Activated naive CD4-positive, alpha-beta T cell treated with anti-CD3 and anti-CD28 coated beads for 36 hours (primary cell): ENCODE measurements at regions of chr2 and their contacts with region 1.

Region 1: DNA sequence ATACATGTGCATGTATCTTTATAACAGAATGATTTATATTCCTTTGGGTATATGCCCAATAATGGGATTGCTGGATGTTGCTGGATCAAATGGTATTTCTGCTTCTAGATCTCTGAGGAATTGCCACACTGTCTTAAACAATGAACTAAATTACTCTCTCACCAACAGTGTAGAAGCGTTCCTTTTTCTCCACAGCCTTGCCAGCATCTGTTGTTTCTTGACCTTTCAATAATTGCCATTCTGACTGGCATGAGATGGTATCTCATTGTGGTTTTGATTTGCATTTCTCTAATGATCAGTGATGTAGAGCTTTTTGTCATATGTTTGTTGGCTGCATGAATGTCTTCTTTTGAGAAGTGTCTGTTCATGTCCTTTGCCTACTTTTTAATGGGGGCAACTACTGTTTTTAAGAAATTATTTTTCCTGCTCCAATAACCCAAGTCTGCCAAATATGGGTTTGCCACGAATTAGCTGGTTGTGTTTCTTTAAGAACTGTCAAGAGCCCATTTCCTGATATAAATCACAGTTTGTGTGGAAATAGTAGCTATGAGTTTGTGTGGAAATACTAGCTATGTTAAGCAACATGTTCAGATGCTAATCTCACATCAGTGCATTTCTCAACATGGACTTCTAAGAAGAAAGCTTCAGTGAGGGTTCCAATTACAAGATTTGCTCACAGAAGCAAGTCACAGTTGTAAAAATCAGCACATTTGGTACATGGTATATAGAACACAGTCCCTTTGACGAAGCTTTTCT is 259.4 kb downstream of the ANAPC1 start:
- DNase-seq: no peak
- H3K4me3 Mint-ChIP-seq: no peak overlapping the region
- H3K27ac Mint-ChIP-seq: no peak overlapping the region
- H3K4me1 Mint-ChIP-seq: peaks cover 14% of the 10 kb centered on the region
- H3K27me3 Mint-ChIP-seq: peaks cover 11% of the 10 kb centered on the region

Region 2: DNA sequence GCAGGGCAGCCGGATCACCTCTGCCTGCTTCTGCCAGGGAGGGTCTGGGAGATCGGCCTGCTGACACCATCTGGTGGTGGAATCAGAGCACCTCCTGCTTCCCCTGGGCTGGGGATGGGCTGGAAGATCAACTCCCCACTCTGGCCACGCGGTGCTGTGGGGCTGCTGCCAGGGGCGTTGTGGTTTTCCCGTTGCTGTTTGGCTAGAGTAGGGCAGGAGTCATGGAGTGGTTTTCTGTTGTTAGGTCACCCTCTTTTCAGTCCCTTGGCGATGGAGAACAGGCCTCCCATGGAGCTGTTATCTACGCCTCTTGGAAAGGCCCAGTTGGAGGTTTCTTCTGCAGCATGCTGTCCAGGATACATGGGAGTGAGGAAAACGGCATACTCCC is 488.7 kb before region 1 on chr2:
- CTCF ChIA-PET with region 1: no interaction called
- intact Hi-C with region 1: no loop called
- DNase-seq: peak; percentile 30
- H3K4me3 Mint-ChIP-seq: no peak overlapping the region
- H3K27ac Mint-ChIP-seq: no peak overlapping the region
- H3K4me1 Mint-ChIP-seq: peaks cover 16% of the 10 kb centered on the region
- H3K27me3 Mint-ChIP-seq: no peaks in the 10 kb centered on the region

Region 3: DNA sequence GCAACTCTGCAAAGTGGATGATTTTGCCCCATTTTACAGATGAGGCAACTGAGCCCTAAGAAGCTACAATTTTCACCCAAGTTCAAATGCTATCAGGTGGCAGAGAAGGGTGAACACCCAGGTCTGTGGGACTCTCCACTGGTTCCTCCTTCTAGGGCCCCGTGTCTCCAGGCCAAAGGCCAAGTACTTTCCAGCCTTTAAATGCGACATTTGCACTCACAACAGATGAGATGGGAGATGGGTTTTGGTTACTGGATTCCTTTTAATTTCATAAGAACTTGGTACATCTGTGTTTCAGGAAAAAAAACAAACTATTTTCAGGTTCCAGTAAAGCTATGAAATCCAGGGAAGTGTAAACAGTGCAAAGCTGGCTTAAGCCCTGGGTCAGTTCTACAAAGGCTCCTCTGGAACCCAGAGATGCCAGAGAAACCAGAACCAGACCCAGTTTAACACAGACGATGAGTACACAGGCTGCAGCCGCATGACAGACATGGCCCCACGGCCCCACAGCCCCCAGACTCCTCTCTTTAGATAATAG is 102.3 kb before region 1 on chr2:
- CTCF ChIA-PET with region 1: no interaction called
- intact Hi-C with region 1: no loop called
- DNase-seq: no peak
- H3K4me3 Mint-ChIP-seq: no peak overlapping the region
- H3K27ac Mint-ChIP-seq: no peak overlapping the region
- H3K4me1 Mint-ChIP-seq: peaks cover 10% of the 10 kb centered on the region
- H3K27me3 Mint-ChIP-seq: peaks cover 43% of the 10 kb centered on the region

Region 4: DNA sequence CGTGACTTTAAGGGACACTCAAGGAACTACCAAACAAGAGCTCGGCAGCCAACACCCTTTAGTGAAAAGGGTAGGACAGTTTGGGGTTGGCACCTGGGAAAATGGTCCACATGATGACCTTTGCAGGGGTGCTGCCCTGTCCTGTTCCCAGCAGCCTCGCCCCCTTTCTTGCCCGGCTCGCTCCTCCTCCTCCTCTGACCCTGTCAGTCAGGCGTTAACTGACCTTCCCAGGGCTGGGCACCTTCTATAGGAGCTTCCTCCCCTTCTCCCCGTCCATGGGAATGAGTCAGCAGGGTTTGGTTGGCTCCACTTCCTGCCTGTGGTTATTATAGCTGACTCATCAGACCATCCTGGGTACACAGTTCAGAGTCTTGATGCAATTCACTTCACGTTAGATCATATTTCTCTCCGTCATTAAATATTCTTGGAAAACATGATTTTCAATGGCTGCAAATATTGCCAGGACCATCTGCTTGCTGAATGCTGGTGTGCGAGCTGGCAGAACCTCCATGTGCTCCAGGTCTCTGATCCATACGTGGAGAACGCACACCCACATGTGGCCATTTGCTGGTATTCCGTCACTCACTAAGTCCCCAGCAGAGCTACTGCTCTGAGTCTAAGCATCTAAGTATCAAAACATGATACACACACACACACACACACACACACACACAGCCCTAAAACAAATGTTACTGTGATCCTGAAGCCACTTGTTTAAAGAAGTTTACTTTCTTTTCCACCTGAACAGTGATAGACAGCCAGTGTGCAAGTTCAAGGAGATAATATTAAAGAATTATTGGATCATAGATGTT is 74.4 kb after region 1 on chr2:
- CTCF ChIA-PET with region 1: no interaction called
- intact Hi-C with region 1: loop called (anchors 10 kb)
- DNase-seq: peak; percentile 78
- H3K4me3 Mint-ChIP-seq: no peak overlapping the region
- H3K27ac Mint-ChIP-seq: no peak overlapping the region
- H3K4me1 Mint-ChIP-seq: peaks cover 19% of the 10 kb centered on the region
- H3K27me3 Mint-ChIP-seq: peaks cover 23% of the 10 kb centered on the region

Region 5: GRCh38 chr2:112254466-112255239 is 630.1 kb after region 1 on chr2 and contains the start of gene ZC3H8:
- CTCF ChIA-PET with region 1: no interaction called
- intact Hi-C with region 1: no loop called
- DNase-seq: peak; percentile 97
- H3K4me3 Mint-ChIP-seq: peak within 1 kb of the TSS; percentile 83
- H3K27ac Mint-ChIP-seq: peak within 1 kb of the TSS; percentile 92
- H3K4me1 Mint-ChIP-seq: peaks cover 10% of the 10 kb centered on the region
- H3K27me3 Mint-ChIP-seq: no peaks in the 10 kb centered on the region
- total RNA-seq, gene ZC3H8: 15.5 to 18.7 TPM